ENCODE measurements at regions of chr11 and their contacts with region 1.

Region 1: DNA sequence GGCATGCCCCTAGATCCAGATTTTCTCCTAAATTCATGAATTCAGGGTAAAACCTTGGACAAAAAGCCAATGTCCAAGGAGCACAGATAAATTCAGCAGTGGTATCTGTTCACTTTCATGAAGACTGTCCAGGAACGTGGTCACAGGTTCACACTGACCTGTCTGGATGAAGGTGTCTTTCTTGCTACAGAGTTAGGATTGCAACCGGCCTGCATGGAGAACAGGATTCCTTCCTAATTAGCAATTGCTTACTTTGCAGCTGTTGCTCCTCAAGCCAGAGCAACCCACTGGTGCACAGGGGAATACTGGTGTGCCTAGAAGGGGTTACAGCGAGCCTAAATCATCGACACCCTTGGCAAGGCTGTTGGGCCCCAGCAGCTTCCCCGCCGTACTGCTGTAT is 47.6 kb downstream of the LMO2 start:
- DNase-seq: no peak
- H3K4me3 ChIP-seq: no peak overlapping the region
- H3K27ac ChIP-seq: no peak overlapping the region
- H3K4me1 ChIP-seq: peaks cover 17% of the 10 kb centered on the region
- H3K27me3 ChIP-seq: no peaks in the 10 kb centered on the region
- CTCF ChIP-seq: no peak

Region 2: DNA sequence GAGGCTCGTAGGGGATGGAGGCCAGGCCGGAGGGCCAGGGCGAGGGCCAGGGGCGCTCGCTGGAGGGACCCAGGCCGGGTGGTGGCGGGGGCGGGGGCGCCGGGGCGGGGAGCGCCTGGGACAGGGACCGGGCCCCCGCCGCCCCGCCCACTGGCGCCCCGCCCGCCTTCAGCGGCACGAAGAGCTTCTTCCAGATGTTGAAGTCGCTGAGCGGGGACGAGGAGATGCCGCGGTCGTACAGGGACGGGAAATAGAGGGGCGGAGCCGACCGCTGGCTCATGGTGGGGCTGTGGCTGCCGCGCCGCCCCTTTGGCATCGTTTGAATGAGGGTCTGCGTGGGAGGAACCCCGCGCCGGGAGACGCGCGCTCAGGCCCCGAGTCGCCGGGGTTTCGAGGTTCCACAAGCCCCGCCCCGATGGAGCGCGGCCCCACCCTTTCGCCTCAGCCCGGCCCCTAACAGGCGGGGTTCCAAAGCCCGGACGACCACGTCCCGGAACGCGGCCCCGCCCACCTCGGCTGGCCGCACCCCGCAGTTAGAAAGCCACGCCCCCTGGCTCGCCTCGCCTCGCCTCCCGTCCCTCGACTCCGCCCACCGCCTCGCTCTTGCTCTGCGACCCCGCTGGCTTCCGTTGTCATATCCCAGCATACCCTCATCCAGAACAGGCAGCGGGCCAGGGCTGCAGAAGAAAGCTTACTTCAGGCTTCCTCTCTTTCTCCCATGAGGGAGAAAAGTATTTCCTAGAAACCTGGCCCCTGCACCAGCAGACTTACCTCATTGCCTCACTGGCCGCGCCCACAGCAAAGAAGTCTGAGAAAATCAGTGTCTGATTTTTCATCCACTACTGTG is 143.6 kb before region 1 on chr11 and contains the start of gene C11orf91:
- CTCF ChIA-PET with region 1: no interaction called
- POLR2A ChIA-PET with region 1: no interaction called
- intact Hi-C with region 1: no loop called
- DNase-seq: peak; percentile 100
- H3K4me3 ChIP-seq: peak within 1 kb of the TSS; percentile 42
- H3K27ac ChIP-seq: peak within 1 kb of the TSS; percentile 74
- H3K4me1 ChIP-seq: peaks cover 40% of the 10 kb centered on the region
- H3K27me3 ChIP-seq: no peaks in the 10 kb centered on the region
- CTCF ChIP-seq: no peak
- total RNA-seq, gene C11orf91: not detected in 2 replicates

Region 3: DNA sequence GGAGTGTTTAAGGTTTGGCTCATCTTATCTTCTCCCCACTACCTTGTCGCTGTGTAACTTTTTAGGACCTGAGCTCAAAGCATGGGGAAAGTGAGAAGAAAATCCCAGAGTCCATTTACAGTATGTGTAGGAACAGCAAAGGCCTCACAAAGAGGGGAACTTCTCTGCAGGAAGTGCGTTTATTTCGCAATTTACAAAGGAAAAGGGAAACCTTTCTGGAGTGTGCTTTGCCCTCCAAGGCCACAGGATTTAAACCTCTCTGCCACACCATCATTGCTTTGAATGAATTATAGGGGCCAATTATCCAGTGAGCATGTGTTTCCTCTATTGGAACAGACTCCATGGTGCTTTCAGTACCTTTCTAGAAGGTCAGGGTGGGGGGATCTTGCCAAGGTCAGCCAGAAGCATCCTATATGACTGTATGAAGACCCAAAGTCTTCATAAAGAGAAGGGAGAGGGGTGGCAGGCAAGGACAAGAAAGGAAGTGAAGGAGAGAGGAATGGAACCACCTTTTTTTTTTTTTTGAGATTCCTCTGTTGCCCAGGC is 115.7 kb after region 1 on chr11:
- CTCF ChIA-PET with region 1: no interaction called
- POLR2A ChIA-PET with region 1: no interaction called
- intact Hi-C with region 1: no loop called
- DNase-seq: no peak
- H3K4me3 ChIP-seq: no peak overlapping the region
- H3K27ac ChIP-seq: no peak overlapping the region
- H3K4me1 ChIP-seq: no peaks in the 10 kb centered on the region
- H3K27me3 ChIP-seq: no peaks in the 10 kb centered on the region
- CTCF ChIP-seq: no peak

Region 4: GRCh38 chr11:34149786-34150185 is 305.6 kb after region 1 on chr11:
- CTCF ChIA-PET with region 1: no interaction called
- POLR2A ChIA-PET with region 1: interaction called, 11 read pairs
- intact Hi-C with region 1: loop called (anchors 10 kb)
- DNase-seq: peak; percentile 57
- H3K4me3 ChIP-seq: no peak overlapping the region
- H3K27ac ChIP-seq: peak overlapping the region; percentile 35
- H3K4me1 ChIP-seq: peaks cover 16% of the 10 kb centered on the region
- H3K27me3 ChIP-seq: no peaks in the 10 kb centered on the region
- CTCF ChIP-seq: peak; percentile 62

Measured in A673 (cell line).